Mammary epithelial cell (primary cell): ENCODE measurements at regions of chr15 and their contacts with region 1.

Region 1: DNA sequence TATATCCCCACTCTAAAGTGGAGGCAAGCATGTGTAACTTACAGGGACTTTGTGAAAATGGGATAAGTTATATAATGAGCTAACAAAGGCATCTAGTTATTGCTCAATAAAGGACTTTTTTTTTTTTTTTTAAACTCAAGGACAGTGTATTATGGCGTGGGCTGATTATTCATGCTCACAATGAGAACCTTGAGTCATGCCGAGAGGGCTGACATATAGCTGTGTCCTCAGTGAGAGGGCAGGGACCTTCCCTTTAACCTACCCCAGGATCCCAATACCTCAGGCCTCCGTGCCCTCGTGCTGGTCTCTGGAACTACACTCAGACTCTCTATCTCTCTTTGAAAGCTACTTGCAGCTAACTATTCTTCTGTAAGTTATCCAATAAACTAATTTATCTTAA is 319.9 kb upstream of the ICE2 start:
- DNase-seq: peak; percentile 72
- H3K4me3 ChIP-seq: no peak overlapping the region
- H3K27ac ChIP-seq: no peak overlapping the region
- H3K4me1 ChIP-seq: no peaks in the 10 kb centered on the region
- H3K27me3 ChIP-seq: peaks cover 2% of the 10 kb centered on the region
- CTCF ChIP-seq: no peak

Region 2: GRCh38 chr15:60840306-60840702 is 41.5 kb after region 1 on chr15:
- CTCF ChIA-PET with region 1: no interaction called
- dilution Hi-C with region 1: no loop called
- in situ Hi-C with region 1: no loop called
- intact Hi-C with region 1: no loop called
- DNase-seq: no peak
- H3K4me3 ChIP-seq: no peak overlapping the region
- H3K27ac ChIP-seq: no peak overlapping the region
- H3K4me1 ChIP-seq: no peaks in the 10 kb centered on the region
- H3K27me3 ChIP-seq: no peaks in the 10 kb centered on the region
- CTCF ChIP-seq: no peak

Region 3: GRCh38 chr15:60854858-60855564 is 56.2 kb after region 1 on chr15:
- CTCF ChIA-PET with region 1: no interaction called
- dilution Hi-C with region 1: loop called (anchors 5 kb)
- in situ Hi-C with region 1: no loop called
- intact Hi-C with region 1: no loop called
- DNase-seq: peak; percentile 24
- H3K4me3 ChIP-seq: no peak overlapping the region
- H3K27ac ChIP-seq: no peak overlapping the region
- H3K4me1 ChIP-seq: no peaks in the 10 kb centered on the region
- H3K27me3 ChIP-seq: no peaks in the 10 kb centered on the region
- CTCF ChIP-seq: no peak